T-cell (primary cell): ENCODE measurements at regions of chr13 and their contacts with region 1.

Region 1: GRCh38 chr13:69545551-69545950 is 562.1 kb upstream of the ATXN8OS start:
- DNase-seq: no peak
- ATAC-seq: no peak
- H3K4me3 ChIP-seq: no peak overlapping the region
- H3K4me3 Mint-ChIP-seq: no peak overlapping the region
- H3K27ac ChIP-seq: no peak overlapping the region
- H3K27ac Mint-ChIP-seq: no peak overlapping the region
- H3K4me1 ChIP-seq: no peaks in the 10 kb centered on the region
- H3K4me1 Mint-ChIP-seq: no peaks in the 10 kb centered on the region
- H3K27me3 ChIP-seq: no peaks in the 10 kb centered on the region
- H3K27me3 Mint-ChIP-seq: no peaks in the 10 kb centered on the region

Region 2: DNA sequence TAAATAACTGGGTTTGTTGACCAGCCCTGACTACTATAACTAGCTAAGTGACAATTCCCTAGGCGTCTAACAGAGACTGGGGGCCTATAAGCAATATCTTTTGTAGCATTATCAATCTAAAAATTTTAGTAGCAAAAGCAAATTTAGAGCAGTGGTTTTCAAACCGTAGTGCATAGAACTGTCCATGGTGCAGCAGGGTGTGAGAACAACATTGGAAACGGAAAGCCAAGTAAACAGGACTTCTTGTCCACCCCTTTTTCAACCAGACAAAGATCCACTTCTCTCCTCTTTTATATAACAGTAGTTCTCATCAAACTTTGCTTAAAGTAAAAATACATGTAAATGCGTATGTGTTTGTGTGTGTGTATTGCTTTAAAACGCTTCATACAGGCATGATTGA is 537.1 kb before region 1 on chr13:
- CTCF ChIA-PET with region 1: interaction called in 1 of 2 experiments, 11 read pairs
- POLR2A ChIA-PET with region 1: no interaction called
- DNase-seq: no peak
- ATAC-seq: no peak
- H3K4me3 ChIP-seq: no peak overlapping the region
- H3K4me3 Mint-ChIP-seq: no peak overlapping the region
- H3K27ac ChIP-seq: no peak overlapping the region
- H3K27ac Mint-ChIP-seq: no peak overlapping the region
- H3K4me1 ChIP-seq: no peaks in the 10 kb centered on the region
- H3K4me1 Mint-ChIP-seq: no peaks in the 10 kb centered on the region
- H3K27me3 ChIP-seq: no peaks in the 10 kb centered on the region
- H3K27me3 Mint-ChIP-seq: no peaks in the 10 kb centered on the region

Region 3: DNA sequence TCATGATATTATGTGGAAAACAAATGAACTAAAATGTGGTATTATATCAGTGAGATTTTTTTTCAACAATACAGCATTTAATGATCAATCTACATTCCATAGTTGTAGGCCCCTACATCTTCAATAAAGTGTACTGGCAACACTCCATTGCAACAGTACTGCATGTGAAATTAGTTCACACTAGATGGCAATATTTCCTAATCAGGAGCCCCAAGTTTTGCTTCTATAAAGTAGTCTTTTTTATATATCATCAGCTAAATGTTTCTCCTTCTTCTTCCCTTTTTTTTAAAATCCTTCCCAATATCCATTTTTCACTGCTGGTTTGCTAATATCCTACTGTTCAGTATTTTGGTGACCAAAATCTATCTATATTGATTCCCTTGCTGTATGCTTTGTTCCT is 33.8 kb after region 1 on chr13:
- CTCF ChIA-PET with region 1: no interaction called
- POLR2A ChIA-PET with region 1: no interaction called
- DNase-seq: no peak
- ATAC-seq: no peak
- H3K4me3 ChIP-seq: no peak overlapping the region
- H3K4me3 Mint-ChIP-seq: no peak overlapping the region
- H3K27ac ChIP-seq: no peak overlapping the region
- H3K27ac Mint-ChIP-seq: no peak overlapping the region
- H3K4me1 ChIP-seq: no peaks in the 10 kb centered on the region
- H3K4me1 Mint-ChIP-seq: no peaks in the 10 kb centered on the region
- H3K27me3 ChIP-seq: no peaks in the 10 kb centered on the region
- H3K27me3 Mint-ChIP-seq: no peaks in the 10 kb centered on the region

Region 4: DNA sequence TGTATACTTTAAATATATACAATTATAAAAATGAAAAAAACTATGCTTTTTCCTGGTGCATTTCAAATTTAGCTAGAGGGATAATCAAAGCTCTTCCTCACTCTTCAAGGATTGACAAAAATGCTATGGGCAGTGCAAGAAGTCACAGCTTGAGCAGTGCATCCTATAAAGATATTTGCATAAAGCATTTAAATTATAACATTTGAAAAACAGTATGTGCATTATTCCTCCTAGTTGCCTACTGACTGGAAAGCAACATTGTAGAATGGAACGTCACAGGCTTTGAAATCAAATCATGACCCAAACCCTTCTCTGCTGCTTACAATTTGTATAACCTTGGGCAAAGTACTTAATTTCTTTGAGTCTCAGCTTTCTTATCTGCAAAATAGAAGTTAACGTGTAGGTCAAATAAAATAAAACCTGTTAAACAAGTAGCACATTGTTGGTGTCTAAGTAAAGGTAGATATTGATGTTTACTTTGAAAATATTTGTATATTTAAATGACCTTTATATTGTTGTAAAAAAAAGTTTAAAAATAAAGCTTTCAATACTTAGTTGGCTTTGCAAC is 571.9 kb after region 1 on chr13:
- CTCF ChIA-PET with region 1: no interaction called
- POLR2A ChIA-PET with region 1: no interaction called
- DNase-seq: no peak
- ATAC-seq: no peak
- H3K4me3 ChIP-seq: no peak overlapping the region
- H3K4me3 Mint-ChIP-seq: no peak overlapping the region
- H3K27ac ChIP-seq: no peak overlapping the region
- H3K27ac Mint-ChIP-seq: no peak overlapping the region
- H3K4me1 ChIP-seq: no peaks in the 10 kb centered on the region
- H3K4me1 Mint-ChIP-seq: no peaks in the 10 kb centered on the region
- H3K27me3 ChIP-seq: no peaks in the 10 kb centered on the region
- H3K27me3 Mint-ChIP-seq: no peaks in the 10 kb centered on the region